ENCODE measurements at regions of chr11 and their contacts with region 1.

Region 1: DNA sequence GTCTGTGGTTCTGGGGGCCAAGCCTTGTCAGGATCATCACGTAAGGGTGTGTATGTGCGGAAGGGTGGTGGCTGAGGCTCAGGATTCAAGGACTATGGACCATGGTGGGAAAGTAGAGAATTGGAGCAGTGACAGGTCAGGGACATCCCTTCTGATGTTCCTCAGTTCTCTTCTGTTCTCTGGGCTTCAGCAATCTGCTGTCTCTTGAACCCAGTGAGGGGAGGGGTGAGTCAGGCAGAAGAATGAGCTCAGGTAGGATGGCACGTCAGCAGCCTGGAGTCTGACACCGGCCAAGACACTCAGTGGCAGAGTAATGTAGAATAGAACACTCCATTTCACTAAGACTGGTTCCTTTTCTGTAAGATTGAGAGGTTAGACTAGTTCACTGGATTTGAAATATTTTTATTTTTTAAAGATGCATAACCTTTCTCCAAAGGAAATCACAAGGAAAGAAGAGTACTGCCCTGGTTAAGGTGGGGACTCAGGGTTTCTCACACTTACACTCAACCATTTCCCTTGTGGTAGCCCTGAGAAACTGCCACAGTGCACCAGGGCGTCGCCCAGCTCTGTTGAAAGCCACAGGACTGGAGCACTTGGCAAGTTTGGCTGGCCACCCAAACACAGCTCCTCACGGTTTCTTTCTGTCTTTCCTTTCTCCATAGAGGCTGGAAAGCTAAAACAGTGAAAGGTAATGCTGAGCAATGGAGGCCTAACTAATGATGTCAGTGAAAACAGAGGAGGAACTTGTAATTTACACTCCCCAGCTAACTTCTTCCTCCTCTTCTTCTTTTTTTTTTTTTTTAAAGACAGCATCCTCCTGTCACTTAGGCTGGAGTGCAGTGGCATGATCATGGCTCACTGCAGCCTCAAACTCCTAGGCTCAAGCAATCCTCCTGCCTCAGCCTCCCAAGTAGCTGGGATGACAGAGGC is 23.1 kb upstream of the MICAL2 start:
- DNase-seq: no peak
- H3K4me3 ChIP-seq: no peak overlapping the region
- H3K27ac ChIP-seq: no peak overlapping the region
- H3K4me1 ChIP-seq: peaks cover under 1 to 6% (median 6%) of the 10 kb centered on the region in 4 experiments
- H3K27me3 ChIP-seq: no peaks in the 10 kb centered on the region
- CTCF ChIP-seq: peak in 1 of 3 experiments; percentile 7; a peak in 1 of 4 replicates
- EP300 ChIP-seq: no peak
- POLR2A ChIP-seq: no peak
- RAD21 ChIP-seq: no peak

Region 2: DNA sequence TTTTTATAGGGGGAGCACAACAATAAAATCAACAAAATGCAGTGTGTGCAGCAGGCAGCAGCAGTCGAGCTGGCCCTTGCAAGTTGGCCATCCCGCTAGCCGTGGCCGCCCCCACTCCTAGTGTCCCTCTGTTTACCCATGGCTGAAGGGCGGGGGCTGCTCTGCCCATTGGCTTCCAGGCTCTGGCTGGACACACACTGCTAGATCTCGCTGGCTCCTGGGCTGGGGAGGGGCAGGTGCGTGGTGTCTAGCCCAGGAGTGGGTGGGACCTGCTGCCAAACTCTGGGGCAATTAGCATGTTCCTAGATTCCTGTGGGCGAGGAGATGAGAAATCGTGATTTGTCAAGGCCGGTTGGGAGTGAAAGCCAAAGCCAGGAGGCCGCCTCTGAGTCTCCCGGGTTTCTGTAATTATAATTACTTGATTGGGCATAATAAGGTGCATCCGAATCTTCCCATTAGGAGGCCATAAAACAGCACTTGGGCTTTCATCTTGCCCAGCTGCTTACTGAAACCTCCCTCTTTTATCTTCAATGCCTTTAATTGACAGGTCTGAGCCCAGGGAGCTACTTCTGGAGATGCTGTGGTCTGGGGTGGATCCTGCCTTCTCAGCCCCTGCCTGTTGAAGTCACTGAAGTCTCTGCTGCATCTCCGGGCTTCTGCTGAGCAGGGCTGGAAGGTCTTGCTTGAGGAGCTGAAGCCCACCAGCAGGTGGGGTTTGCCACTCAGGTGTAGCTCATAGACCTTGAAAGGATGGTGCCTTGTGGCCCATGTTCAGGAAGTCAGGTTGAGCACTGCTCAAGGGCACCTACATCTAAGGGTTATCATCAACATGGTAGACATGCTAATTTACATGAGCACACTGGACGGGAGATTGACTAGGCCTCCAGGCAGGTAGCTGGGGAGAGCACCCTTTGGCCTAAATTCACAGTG is 34.4 kb before region 1 on chr11:
- CTCF ChIA-PET with region 1: interaction called, 12 read pairs
- POLR2A ChIA-PET with region 1: no interaction called
- DNase-seq: no peak
- H3K4me3 ChIP-seq: no peak overlapping the region
- H3K27ac ChIP-seq: no peak overlapping the region
- H3K4me1 ChIP-seq: peaks cover 0 to 3% (median under 1%) of the 10 kb centered on the region in 4 experiments; a peak in 2 of 7 replicates
- H3K27me3 ChIP-seq: no peaks in the 10 kb centered on the region
- CTCF ChIP-seq: peak; percentile 43 to 69 (median 62)
- EP300 ChIP-seq: no peak
- POLR2A ChIP-seq: no peak
- RAD21 ChIP-seq: peak; percentile 55 to 73

Region 3: DNA sequence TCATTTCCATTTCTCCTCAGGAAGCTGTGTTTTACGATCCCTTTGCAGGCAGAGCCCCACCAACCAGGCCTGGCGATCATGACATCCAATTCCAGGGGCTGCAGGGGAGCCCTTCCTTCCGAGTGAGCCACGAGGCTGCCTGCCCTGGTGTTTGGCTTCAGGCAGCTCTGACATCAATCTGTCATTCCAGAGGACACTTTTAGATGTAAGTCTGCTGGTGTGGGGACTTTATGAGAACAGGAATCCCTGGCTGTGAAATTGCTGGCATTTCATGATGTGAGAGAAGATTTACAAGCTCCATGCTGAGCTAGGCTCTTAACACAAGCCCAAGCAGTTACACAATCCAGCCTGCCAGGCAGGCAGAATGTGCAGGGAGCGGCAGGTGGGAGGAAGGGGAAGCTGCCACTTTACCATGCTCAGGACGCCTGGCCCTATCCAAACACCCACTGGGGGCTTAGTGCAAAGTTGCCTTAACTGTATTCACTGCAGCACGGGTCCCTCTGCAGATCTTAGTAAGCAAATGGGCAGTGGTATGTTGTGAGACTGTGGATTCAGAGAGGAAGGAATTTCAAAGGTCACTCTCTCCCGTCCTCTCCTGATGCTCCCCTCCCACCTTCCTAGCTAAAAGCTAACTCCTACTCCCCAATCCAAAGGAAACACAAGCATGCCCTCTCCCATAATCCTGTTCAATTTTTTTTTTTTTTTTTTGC is 20.4 kb before region 1 on chr11:
- CTCF ChIA-PET with region 1: interaction called, 28 read pairs
- POLR2A ChIA-PET with region 1: no interaction called
- DNase-seq: no peak
- H3K4me3 ChIP-seq: no peak overlapping the region; a peak in 1 of 8 replicates
- H3K27ac ChIP-seq: no peak overlapping the region
- H3K4me1 ChIP-seq: peaks cover 2 to 9% (median 5%) of the 10 kb centered on the region in 4 experiments; a peak in 4 of 7 replicates
- H3K27me3 ChIP-seq: peaks cover 0 to 2% (median under 1%) of the 10 kb centered on the region in 4 experiments; a peak in 1 of 7 replicates
- CTCF ChIP-seq: no peak
- EP300 ChIP-seq: no peak
- POLR2A ChIP-seq: no peak
- RAD21 ChIP-seq: no peak

Region 4: GRCh38 chr11:12075822-12076821 is 11.2 kb before region 1 on chr11:
- CTCF ChIA-PET with region 1: interaction called, 28 read pairs
- POLR2A ChIA-PET with region 1: no interaction called
- DNase-seq: no peak
- H3K4me3 ChIP-seq: no peak overlapping the region
- H3K27ac ChIP-seq: no peak overlapping the region
- H3K4me1 ChIP-seq: no peaks in the 10 kb centered on the region
- H3K27me3 ChIP-seq: no peaks in the 10 kb centered on the region
- CTCF ChIP-seq: no peak
- EP300 ChIP-seq: no peak
- POLR2A ChIP-seq: no peak
- RAD21 ChIP-seq: no peak

Region 5: GRCh38 chr11:12102588-12103410 is 15.5 kb after region 1 on chr11:
- CTCF ChIA-PET with region 1: interaction called, 37 read pairs
- POLR2A ChIA-PET with region 1: interaction called, 3 read pairs
- DNase-seq: no peak
- H3K4me3 ChIP-seq: no peak overlapping the region
- H3K27ac ChIP-seq: no peak overlapping the region
- H3K4me1 ChIP-seq: peaks cover 3 to 13% (median 9%) of the 10 kb centered on the region in 4 experiments
- H3K27me3 ChIP-seq: peaks cover 0 to 1% (median 0%) of the 10 kb centered on the region in 4 experiments; a peak in 2 of 7 replicates
- CTCF ChIP-seq: no peak
- EP300 ChIP-seq: no peak
- POLR2A ChIP-seq: no peak
- RAD21 ChIP-seq: no peak

Region 6: DNA sequence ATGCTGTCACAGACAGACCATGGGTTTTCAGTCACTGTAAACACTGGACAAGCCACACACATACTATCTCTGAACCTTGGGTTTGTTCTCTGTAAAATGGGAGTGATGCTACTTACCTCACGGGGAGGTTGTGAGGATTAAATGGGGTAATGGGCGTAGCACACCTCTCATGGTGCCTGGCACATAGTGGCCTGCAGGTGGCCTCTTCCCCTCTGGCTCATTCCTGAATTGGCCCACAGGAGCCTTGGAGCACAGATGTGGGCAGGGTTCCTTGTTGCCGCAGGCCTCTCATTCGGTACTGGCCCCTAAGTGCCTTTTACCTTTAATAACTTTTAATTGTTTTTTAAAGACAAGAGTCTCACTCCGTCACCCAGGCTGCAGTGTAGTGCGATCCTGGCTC is 34.7 kb after region 1 on chr11:
- CTCF ChIA-PET with region 1: interaction called, 11 read pairs
- POLR2A ChIA-PET with region 1: no interaction called
- DNase-seq: peak in 1 of 2 experiments; percentile 58
- H3K4me3 ChIP-seq: no peak overlapping the region
- H3K27ac ChIP-seq: no peak overlapping the region
- H3K4me1 ChIP-seq: no peaks in the 10 kb centered on the region
- H3K27me3 ChIP-seq: 0 out of 7 replicates have a peak, but pooled peaks cover 0 to 3% (median 0%) of the 10 kb centered on the region in 4 experiments
- CTCF ChIP-seq: peak; percentile 81 to 93 (median 87)
- EP300 ChIP-seq: no peak
- POLR2A ChIP-seq: no peak
- RAD21 ChIP-seq: peak; percentile 72 to 80